Right cardiac atrium (tissue), 5 donors: ENCODE measurements at regions of chr10 and their contacts with region 1.

Region 1: DNA sequence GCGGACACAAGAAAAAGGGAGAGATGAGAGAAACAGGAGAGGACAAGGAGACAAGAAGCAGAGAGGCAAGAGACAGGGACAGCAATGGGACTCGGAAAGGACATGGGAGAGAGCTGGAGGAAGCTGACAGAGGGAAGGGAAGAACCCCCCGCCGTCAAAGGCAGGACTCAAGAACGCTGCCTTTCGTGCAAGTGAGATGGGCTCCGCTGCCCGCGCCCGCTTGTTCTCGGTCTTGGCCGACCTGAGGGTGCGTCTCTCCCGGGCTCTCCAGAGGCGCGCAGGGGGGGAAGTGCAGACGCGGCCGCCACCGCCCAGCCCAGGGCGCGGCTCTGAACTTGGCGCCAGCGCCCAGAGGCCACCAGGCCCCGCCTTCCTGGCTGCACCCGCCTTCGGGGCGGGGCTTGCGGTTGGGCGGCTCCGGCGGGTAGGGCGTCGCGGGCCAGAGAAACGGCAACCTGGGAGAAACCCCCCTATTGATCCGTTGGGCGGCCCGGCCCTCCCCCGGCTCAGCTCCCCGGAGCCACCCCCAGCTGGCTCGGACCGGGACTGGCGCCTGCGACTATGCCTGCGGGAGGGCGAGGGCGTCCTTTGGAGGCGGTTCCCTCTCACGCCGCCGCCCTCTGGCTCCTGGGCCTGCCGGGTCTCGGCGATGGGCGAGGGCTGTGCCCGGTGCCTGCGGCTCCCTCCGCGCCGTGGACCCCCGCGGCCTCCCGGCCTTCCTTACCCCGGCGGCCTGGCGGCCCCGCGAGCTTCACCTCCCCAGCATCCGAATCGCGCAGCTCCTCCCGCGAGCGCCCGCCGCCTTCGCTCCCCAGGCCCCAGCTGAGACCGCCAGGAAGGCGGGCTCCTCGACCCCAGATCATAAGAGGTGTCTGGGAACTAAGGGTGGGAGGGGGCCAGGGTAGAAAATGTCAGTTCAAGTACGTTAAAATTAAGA is 2.2 kb upstream of the ANTXRL start:
- DNase-seq: peak; percentile 86 to 95 (median 95)
- ATAC-seq: peak; percentile 95 to 96
- H3K4me3 ChIP-seq: peak overlapping the region; percentile 58
- H3K27ac ChIP-seq: peak overlapping the region; percentile 63
- H3K4me1 ChIP-seq: peaks cover 2% of the 10 kb centered on the region
- H3K27me3 ChIP-seq: no peaks in the 10 kb centered on the region

Region 2: DNA sequence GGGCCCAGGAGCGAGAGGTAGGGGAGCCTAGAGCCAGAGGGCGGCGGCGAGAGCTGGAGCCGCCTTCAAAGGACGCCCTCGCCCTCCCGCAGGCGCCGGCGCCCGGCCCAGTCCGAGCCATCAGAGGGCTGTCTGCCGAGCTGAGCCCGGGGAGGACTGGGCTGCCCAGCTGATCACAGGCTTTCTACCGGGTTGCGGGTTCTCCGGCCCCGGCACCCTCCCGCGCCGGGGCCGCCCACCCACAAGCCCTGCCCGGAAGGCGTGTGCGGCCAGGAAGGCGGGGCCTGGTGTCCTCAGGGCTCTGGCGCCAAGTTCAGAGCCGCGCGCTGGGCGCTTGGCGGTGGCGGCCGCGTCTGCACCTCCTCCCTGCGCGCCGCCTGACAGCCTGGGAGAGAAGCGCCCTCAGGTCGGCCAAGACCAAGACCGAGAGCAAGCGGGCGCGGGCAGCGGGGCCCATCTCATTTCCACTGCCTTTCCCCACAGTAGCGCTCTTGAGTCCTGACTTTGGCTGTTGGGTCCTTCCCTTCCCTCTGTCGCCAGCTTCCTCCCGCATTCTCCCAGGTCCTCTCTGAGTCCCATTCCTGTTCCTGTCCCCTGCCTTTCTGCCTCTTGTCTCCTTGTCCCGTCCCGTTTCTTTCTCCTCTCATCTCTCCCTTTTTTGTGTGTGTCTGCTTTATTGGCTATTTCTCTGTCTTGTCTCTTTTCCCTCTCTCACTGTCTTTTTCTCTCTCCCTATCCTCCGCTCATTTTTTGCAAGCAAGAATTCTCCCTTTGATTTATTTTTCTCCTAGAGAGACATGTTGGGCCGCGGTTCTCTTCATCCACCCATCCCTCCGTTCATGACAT is 177.9 kb before region 1 on chr10:
- intact Hi-C with region 1: loop called in 3 of 4 experiments (anchors 5 to 10 kb)
- DNase-seq: peak; percentile 62 to 88 (median 82)
- ATAC-seq: peak; percentile 99 to 100
- H3K4me3 ChIP-seq: peak overlapping the region; percentile 77
- H3K27ac ChIP-seq: peak overlapping the region; percentile 16
- H3K4me1 ChIP-seq: no peaks in the 10 kb centered on the region
- H3K27me3 ChIP-seq: no peaks in the 10 kb centered on the region

Region 3: DNA sequence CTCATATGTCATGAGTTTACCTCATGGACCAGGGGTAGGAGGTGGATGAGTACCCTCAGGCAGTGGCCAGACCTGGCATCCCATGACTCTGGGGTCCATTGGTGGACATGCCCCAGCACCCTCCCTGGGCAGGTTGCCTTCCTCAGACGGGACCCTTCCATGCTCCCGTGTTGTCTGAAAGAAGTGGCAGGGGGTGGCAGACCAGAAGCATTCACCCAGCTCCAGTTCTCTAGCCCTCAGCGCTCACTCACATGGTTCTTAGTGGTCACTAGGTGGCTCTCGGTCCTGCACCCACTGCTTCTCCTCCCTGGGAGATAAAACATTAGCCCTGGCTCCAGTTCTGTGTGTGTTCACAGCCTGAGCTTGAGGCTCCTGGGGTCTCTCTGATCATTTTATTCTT is 1069.6 kb after region 1 on chr10:
- intact Hi-C with region 1: no loop called
- DNase-seq: no peak
- ATAC-seq: no peak
- H3K4me3 ChIP-seq: no peak overlapping the region
- H3K27ac ChIP-seq: no peak overlapping the region
- H3K4me1 ChIP-seq: no peaks in the 10 kb centered on the region
- H3K27me3 ChIP-seq: no peaks in the 10 kb centered on the region

Region 4: DNA sequence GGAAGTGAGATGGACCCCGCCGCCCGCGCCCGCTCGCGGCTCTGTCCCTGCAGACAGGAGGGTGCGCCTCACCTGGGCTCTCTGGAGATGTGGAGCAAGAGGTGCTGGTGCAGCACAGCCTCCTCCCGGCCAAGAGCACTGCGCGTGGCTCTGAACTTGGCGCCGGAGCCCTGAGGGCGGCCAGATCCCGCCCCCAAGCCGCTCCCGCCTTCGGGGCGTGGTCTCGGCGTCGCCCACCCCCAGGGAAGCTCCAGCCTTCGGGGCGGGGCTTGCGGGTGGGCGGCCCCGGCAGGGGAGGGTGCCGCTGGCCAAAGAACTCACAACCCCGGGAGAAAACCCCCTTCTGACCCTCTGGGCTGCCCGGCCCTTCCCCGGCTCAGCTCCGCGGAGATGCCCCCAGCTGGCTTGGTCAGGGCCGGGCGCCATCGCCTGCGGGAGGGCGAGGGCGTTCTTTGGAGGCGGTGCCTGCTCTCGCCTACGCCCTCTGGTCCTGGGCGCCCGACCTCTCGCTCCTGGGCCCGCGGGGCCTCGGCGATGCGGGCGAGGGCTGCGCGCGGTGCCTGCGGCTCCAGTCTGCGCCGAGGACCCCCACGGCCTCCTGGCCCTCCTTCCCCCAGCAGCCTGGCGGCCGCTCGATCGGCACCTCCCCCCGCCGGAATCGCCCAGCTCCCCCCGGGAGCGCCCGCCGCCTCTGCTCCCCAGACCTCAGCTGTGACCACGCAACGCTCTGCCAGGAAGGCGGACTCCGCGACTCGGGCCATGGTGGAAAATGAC is 1099.8 kb after region 1 on chr10 and contains the start of gene ZNF488:
- intact Hi-C with region 1: loop called in 1 of 4 experiments (anchors 5 kb)
- DNase-seq: peak; percentile 87 to 94 (median 94)
- ATAC-seq: peak; percentile 99
- H3K4me3 ChIP-seq: peak within 1 kb of the TSS; percentile 69
- H3K27ac ChIP-seq: peak within 1 kb of the TSS; percentile 34
- H3K4me1 ChIP-seq: no peaks in the 10 kb centered on the region
- H3K27me3 ChIP-seq: no peaks in the 10 kb centered on the region
- total RNA-seq, gene ZNF488: not detected